ENCODE measurements at regions of chr20 and their contacts with region 1.

Region 1: GRCh38 chr20:56945059-56945458 is 316.0 kb downstream of the TFAP2C start:
- DNase-seq: peak; percentile 41
- H3K27ac ChIP-seq: no peak overlapping the region
- CTCF ChIP-seq: no peak

Region 2: DNA sequence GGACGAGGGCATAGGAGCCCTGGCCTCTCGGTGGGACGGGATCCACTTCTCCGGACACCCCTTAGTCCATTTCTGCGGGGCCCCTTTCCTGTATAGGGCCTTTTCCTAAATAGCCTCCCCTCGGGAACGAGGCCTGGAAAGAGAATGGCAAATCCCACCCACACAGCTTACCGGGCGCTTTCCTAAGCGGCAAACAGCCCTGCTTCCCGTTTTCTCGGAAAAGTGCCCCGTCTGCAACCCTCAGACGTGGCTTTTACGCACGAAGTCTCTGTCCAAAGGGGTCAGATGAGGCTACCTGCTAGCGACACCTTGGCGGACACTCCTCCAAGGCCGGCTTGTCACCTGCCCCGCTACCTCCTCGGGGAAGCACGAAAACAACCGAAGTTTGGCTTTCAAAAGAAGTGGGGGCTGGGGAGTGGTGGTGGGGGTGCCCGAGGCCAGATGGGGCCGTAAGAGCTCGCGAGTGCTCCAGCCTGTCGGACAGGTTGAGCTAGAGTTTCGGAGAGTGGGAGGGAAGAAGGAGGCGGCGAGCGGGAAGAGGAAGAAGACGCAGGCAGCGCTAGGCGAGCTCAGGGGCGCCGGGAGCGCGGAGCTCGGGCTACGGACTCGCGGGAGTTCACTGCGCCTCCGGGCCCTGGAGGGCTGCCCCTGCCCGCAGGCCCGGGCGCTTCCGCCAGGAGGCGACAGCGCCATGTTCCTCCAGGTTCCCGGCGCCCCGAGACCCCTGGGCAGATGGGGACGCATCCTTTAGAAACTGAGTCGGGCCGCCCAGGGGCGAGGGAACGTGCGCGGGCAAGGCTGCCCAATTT is 315.2 kb before region 1 on chr20:
- CTCF ChIA-PET with region 1: interaction called, 10 read pairs
- POLR2A ChIA-PET with region 1: no interaction called
- DNase-seq: peak; percentile 97
- H3K27ac ChIP-seq: peak overlapping the region; percentile 70
- CTCF ChIP-seq: peak; percentile 97

Region 3: GRCh38 chr20:57167971-57168706 is 223.1 kb after region 1 on chr20:
- CTCF ChIA-PET with region 1: no interaction called
- POLR2A ChIA-PET with region 1: no interaction called
- DNase-seq: peak; percentile 41
- H3K27ac ChIP-seq: no peak overlapping the region
- CTCF ChIP-seq: no peak

Region 4: DNA sequence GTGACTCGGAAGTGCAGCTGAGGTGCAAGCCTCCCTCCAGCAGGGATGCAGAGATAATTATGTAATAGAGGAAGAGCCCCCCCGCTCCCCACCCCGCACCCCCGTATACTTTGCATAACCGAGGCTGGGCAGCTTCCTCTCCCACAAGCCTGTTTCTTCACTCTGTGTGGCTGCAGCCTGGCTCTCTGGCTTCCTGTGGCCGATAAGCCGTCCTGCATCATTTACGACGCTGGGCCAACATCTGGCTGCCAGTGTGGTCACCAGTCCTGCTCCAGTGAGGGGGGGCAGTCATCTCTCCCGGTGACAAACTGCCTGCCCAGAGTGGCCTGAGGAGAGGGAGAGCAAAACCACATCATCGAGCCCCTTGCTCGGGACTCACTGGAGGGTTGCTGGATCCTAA is 505.4 kb after region 1 on chr20:
- CTCF ChIA-PET with region 1: no interaction called
- POLR2A ChIA-PET with region 1: no interaction called
- DNase-seq: no peak
- H3K27ac ChIP-seq: no peak overlapping the region
- CTCF ChIP-seq: no peak

Measured in RWPE1 (cell line).